BJ (cell line): ENCODE measurements at regions of chr2 and their contacts with region 1.

Region 1: GRCh38 chr2:238784671-238785527 is 63.0 kb upstream of the TWIST2 start:
- DNase-seq: peak; percentile 84
- H3K4me3 ChIP-seq: no peak overlapping the region
- H3K27me3 ChIP-seq: no peaks in the 10 kb centered on the region
- CTCF ChIP-seq: peak; percentile 78

Region 2: DNA sequence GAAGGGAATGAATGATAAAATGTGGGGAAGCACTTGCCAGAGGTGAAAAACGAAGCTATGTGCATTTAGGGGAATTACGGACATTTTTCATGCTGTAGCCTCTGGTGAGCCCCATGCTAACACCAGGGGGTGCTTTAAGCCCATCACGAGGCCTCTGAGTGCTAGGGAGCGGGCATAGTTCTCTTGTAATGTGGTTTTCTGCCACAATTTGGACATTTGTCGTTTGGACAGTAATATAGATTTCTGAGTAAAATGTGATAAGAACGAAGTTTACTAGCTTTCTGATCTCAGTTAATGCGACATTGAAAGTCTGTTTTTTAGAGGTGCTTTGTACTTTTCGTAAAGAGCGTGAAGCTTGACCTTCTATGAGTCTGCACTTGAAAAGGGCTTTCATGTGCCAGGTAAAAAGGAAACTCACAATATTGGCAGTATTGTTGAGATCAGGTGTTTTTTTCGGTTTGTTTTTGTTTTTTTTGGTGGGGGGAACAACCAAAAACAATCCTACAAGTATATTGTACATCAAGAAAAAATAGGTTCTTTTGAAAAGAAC is 414.0 kb before region 1 on chr2:
- CTCF ChIA-PET with region 1: interaction called, 18 read pairs
- POLR2A ChIA-PET with region 1: no interaction called
- DNase-seq: no peak
- H3K4me3 ChIP-seq: no peak overlapping the region
- H3K27me3 ChIP-seq: no peaks in the 10 kb centered on the region
- CTCF ChIP-seq: peak; percentile 91

Region 3: DNA sequence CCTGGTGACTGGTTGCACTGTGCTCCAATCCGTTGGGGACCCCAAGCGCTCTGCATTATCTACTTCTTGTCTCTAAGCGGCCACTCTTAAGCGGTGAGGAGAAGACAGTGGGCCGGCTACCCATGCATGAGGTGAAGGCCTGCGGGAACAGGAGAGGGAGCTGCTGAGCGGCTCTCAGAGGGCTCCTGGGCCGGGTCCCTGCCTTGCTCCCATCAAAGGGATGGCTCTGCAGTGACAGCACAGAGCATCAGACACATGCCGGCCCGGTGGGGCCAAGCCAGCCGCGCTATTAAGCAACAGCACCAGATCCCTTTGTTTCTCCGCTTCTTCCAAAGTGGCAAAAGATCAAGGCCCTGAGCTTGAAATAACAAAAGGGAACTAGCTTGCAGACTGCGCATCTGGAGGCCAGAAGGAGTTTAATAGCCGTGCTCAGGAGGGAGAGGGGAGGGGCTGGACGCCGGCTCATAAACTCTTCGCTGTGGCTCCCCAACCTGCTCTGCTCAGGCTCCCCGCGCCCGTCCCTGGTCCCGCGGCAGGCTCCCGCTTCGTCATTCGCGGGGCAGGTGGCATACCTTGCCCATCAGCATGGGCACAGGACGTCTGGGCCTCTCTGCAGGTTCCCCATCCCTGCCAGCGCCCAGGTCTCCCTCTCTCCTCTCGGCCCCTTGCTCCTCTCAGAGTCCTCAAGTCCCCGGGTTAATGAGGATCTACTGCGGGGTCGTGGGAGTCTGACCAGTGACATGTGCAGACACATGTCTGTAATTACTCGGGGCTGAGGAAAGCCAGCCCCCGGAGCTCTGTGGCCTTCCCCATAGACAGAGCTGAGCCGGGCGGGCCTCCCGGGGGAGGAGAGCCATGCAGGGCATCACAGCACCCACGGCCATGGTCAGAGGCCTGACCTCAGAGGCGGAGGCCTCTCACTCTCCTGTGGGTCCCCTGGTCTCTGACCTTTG is 261.5 kb before region 1 on chr2:
- CTCF ChIA-PET with region 1: interaction called, 60 read pairs
- POLR2A ChIA-PET with region 1: interaction called, 4 read pairs
- DNase-seq: peak; percentile 79
- H3K4me3 ChIP-seq: no peak overlapping the region
- H3K27me3 ChIP-seq: no peaks in the 10 kb centered on the region
- CTCF ChIP-seq: peak; percentile 70

Region 4: DNA sequence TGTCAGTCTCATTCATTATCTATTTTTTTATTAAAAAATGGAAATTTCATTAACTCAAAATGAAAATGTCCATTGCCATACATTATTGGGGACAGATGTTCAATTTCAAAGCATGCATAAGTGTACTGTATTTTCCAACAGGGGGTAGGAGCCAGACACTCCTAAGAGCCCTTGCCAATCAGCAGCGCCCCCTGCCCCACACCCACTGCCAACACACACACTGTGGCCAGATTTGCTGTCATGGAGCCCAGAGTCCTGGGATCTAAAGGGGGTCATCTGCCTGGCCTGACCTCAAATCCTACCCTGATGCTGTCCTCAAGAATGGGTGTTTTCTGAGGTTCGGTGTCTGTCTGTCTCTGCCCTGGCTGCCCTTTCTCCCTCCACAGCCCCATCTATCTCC is 99.2 kb before region 1 on chr2:
- CTCF ChIA-PET with region 1: interaction called, 17 read pairs
- POLR2A ChIA-PET with region 1: no interaction called
- DNase-seq: no peak
- H3K4me3 ChIP-seq: no peak overlapping the region
- H3K27me3 ChIP-seq: no peaks in the 10 kb centered on the region
- CTCF ChIP-seq: no peak

Region 5: DNA sequence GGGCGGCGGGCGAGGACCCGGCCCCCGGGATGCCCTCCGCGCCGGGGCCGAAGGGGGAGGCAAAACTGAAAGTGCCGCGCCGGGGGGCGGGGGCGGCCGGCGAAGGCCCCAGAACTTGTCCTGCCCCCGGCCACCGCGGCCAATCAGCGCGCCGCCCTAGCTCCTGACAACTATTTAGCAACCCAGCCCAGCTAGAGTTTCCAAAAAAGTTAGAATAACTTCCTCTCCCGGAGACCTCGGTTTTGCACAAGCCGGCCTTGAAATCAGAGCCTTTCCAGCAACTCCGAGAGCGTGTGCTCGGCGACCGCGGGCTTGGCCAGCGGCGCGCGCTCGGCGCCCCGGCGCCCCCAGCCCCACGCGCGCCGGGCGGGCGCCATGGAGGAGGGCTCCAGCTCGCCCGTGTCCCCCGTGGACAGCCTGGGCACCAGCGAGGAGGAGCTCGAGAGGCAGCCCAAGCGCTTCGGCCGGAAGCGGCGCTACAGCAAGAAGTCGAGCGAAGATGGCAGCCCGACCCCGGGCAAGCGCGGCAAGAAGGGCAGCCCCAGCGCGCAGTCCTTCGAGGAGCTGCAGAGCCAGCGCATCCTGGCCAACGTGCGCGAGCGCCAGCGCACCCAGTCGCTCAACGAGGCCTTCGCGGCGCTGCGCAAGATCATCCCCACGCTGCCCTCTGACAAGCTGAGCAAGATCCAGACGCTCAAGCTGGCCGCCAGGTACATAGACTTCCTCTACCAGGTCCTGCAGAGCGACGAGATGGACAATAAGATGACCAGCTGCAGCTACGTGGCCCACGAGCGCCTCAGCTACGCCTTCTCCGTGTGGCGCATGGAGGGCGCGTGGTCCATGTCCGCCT is 63.2 kb after region 1 on chr2 and contains the start of gene TWIST2:
- CTCF ChIA-PET with region 1: interaction called, 84 read pairs
- POLR2A ChIA-PET with region 1: interaction called, 3 read pairs
- DNase-seq: peak; percentile 86
- H3K4me3 ChIP-seq: peak within 1 kb of the TSS; percentile 100
- H3K27me3 ChIP-seq: no peaks in the 10 kb centered on the region
- CTCF ChIP-seq: peak; percentile 32; the same call in 1 of the 2 replicates
- polyA plus RNA-seq, gene TWIST2: 110 and 127 TPM in 2 replicates

Region 6: GRCh38 chr2:238945433-238946150 is 160.7 kb after region 1 on chr2:
- CTCF ChIA-PET with region 1: interaction called, 10 read pairs
- POLR2A ChIA-PET with region 1: no interaction called
- DNase-seq: no peak
- H3K4me3 ChIP-seq: no peak overlapping the region
- H3K27me3 ChIP-seq: no peaks in the 10 kb centered on the region
- CTCF ChIP-seq: peak; percentile 97

Region 7: DNA sequence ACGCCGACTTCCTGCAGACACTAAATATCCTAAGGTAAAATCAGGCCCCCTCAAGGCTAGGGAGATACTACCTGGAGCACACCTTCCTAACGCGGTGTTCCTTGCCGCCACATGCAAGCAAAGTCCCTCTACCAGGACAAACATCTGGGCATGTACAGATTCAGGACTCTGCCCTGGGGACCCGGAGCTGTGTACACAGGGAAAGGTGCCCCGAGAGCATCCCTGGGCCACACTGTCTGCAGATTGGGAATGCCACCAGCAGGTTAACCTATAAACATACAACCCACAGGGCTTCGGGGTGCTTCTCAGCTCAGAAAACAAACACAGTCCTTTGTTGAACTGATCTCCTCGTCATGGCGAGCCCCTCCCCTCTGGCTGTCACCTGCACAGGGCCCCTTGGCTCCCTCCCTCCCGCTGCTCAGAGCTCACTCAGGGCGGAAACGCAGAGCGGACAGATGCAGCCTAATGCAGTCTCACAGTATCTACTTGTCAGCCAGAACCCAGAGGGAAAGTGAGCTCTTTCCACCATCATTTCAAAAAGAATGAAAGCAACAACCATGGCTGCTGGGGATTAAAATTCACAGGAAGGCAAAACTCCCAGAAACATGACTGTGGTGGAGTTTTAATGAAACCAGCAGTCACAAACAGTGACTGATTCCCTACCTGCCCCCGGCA is 397.1 kb after region 1 on chr2:
- CTCF ChIA-PET with region 1: no interaction called
- POLR2A ChIA-PET with region 1: no interaction called
- DNase-seq: no peak
- H3K4me3 ChIP-seq: no peak overlapping the region
- H3K27me3 ChIP-seq: no peaks in the 10 kb centered on the region
- CTCF ChIP-seq: no peak